ENCODE measurements at regions of chr1 and their contacts with region 1.

Region 1: DNA sequence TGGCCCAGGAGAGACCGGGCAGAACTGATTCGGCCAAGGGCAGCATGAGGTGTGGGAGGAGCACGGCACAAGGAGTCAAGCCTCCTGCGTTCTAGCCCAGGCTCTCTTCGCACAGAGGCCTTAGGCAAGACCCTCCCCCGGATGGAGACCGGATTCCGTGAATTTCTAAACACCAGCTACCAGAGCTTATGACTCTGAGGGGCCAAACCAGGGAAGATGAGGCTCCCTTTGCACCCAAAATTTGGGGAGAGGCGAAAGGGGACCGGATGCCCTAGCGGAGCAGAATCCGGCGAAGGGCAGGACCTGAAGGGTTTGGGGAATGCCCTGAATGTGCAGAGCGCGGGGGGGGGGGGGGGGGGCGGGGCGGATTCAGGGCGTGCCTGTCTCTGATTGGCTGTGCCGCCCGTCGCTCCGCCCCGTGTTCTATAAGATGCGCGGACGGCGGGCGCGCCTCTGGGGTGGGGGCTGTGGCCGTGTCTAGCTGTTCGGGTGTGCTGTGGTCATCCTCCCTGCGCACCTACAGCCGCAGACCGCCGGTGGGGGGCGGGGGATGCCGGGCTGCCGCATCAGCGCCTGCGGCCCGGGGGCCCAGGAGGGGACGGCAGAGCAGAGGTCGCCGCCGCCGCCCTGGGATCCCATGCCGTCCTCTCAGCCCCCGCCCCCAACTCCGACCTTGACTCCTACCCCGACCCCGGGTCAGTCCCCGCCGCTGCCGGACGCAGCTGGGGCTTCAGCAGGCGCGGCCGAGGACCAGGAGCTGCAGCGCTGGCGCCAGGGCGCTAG is at the start of gene TRNP1:
- DNase-seq: peak; percentile 88
- ATAC-seq: peak; percentile 54
- H3K4me3 ChIP-seq: peak within 1 kb of the TSS; percentile 92 to 97 (median 96)
- H3K27ac ChIP-seq: peak within 1 kb of the TSS; percentile 100
- H3K4me1 ChIP-seq: peaks cover 72% of the 10 kb centered on the region
- H3K27me3 ChIP-seq: no peaks in the 10 kb centered on the region; a peak in 1 of 5 replicates
- CTCF ChIP-seq: peak; percentile 43
- EP300 ChIP-seq: peak in 1 of 2 experiments; percentile 74; a peak in 2 of 4 replicates
- POLR2A ChIP-seq: peak in 1 of 2 experiments; percentile 97; a peak in 2 of 4 replicates
- RAD21 ChIP-seq: peak; percentile 68
- total RNA-seq, gene TRNP1: 35.6 and 42.0 TPM in 2 replicates

Region 2: GRCh38 chr1:26391450-26391849 is 602.0 kb before region 1 on chr1:
- CTCF ChIA-PET with region 1: no interaction called
- POLR2A ChIA-PET with region 1: no interaction called
- in situ Hi-C with region 1: no loop called
- intact Hi-C with region 1: no loop called
- DNase-seq: peak; percentile 52
- ATAC-seq: peak; percentile 67
- H3K4me3 ChIP-seq: no peak overlapping the region
- H3K27ac ChIP-seq: no peak overlapping the region
- H3K4me1 ChIP-seq: peaks cover 55% of the 10 kb centered on the region
- H3K27me3 ChIP-seq: no peaks in the 10 kb centered on the region; a peak in 2 of 5 replicates
- CTCF ChIP-seq: peak; percentile 81
- EP300 ChIP-seq: no peak
- POLR2A ChIP-seq: no peak
- RAD21 ChIP-seq: peak; percentile 87

Region 3: GRCh38 chr1:26784023-26784871 is 209.2 kb before region 1 on chr1:
- CTCF ChIA-PET with region 1: no interaction called
- POLR2A ChIA-PET with region 1: no interaction called
- in situ Hi-C with region 1: no loop called
- intact Hi-C with region 1: no loop called
- DNase-seq: peak; percentile 99
- ATAC-seq: peak; percentile 76
- H3K4me3 ChIP-seq: peak overlapping the region in 1 of 3 experiments; percentile 17; a peak in 1 of 6 replicates
- H3K27ac ChIP-seq: peak overlapping the region; percentile 97
- H3K4me1 ChIP-seq: peaks cover 60% of the 10 kb centered on the region
- H3K27me3 ChIP-seq: no peaks in the 10 kb centered on the region; a peak in 1 of 5 replicates
- CTCF ChIP-seq: peak; percentile 49
- EP300 ChIP-seq: peak; percentile 76 to 84
- POLR2A ChIP-seq: peak in 1 of 2 experiments; percentile 36; a peak in 1 of 4 replicates
- RAD21 ChIP-seq: no peak

Region 4: DNA sequence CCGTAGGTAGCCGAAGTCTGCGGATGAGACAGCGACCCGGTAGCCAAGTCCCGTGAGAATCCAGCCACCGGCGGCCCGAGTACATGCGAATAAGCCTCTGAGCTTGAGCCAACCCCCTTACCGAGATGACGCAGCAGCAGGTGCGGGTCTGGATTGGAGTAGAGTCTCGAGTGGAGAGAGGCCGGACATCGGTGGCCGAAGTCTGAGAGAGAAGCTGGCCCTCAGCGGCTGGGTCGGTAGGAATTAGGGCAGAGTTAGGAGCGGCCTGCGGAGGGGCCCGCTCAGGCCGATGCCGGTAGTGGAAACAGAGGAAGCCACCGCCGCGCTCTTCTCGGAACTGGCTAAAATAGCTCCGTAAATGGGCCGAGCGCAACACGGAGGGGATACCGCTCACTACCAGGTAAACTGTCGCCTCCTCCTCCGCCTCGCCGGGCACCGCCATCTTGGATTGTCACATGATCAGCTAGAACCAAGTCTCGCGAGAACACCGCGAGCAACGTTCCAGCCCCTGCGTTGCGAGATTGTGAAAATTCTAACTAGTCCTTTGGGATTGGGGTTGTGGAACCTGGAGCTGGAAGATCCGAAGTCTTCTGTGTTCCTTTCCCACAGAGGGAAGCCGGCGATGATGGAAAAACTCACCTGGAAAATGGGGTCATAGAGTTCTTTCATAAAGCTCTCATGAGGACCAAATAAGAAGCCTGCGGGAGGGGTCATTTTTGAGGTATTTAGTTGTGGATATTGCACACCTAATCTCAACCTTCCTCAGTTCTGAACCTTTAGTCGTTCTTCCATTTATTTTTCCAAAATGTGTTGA is 93.2 kb before region 1 on chr1 and contains the start of gene GPATCH3:
- CTCF ChIA-PET with region 1: no interaction called
- POLR2A ChIA-PET with region 1: interaction called, 17 read pairs
- in situ Hi-C with region 1: no loop called
- intact Hi-C with region 1: no loop called
- DNase-seq: peak; percentile 88
- ATAC-seq: peak; percentile 89
- H3K4me3 ChIP-seq: peak within 1 kb of the TSS; percentile 76 to 94 (median 89)
- H3K27ac ChIP-seq: peak within 1 kb of the TSS; percentile 89
- H3K4me1 ChIP-seq: peaks cover 47% of the 10 kb centered on the region
- H3K27me3 ChIP-seq: no peaks in the 10 kb centered on the region; a peak in 1 of 5 replicates
- CTCF ChIP-seq: no peak
- EP300 ChIP-seq: peak in 1 of 2 experiments; percentile 36; a peak in 1 of 4 replicates
- POLR2A ChIP-seq: peak; percentile 79 to 98
- RAD21 ChIP-seq: no peak; the same call in none of the 2 replicates
- total RNA-seq, gene GPATCH3: 11.0 and 12.5 TPM in 2 replicates

Region 5: GRCh38 chr1:26938004-26938658 is 55.3 kb before region 1 on chr1:
- CTCF ChIA-PET with region 1: no interaction called
- POLR2A ChIA-PET with region 1: interaction called, 17 read pairs
- in situ Hi-C with region 1: no loop called
- intact Hi-C with region 1: loop called (anchors 1 kb)
- DNase-seq: peak; percentile 98
- ATAC-seq: peak; percentile 97
- H3K4me3 ChIP-seq: peak overlapping the region in 1 of 3 experiments; percentile 19; a peak in 2 of 6 replicates
- H3K27ac ChIP-seq: peak overlapping the region; percentile 84
- H3K4me1 ChIP-seq: peaks cover 51% of the 10 kb centered on the region
- H3K27me3 ChIP-seq: no peaks in the 10 kb centered on the region
- CTCF ChIP-seq: peak; percentile 48
- EP300 ChIP-seq: peak in 1 of 2 experiments; percentile 88; a peak in 2 of 4 replicates
- POLR2A ChIP-seq: peak; percentile 25 to 51; a peak in 2 of 4 replicates
- RAD21 ChIP-seq: no peak; the same call in 1 of the 2 replicates

Region 6: DNA sequence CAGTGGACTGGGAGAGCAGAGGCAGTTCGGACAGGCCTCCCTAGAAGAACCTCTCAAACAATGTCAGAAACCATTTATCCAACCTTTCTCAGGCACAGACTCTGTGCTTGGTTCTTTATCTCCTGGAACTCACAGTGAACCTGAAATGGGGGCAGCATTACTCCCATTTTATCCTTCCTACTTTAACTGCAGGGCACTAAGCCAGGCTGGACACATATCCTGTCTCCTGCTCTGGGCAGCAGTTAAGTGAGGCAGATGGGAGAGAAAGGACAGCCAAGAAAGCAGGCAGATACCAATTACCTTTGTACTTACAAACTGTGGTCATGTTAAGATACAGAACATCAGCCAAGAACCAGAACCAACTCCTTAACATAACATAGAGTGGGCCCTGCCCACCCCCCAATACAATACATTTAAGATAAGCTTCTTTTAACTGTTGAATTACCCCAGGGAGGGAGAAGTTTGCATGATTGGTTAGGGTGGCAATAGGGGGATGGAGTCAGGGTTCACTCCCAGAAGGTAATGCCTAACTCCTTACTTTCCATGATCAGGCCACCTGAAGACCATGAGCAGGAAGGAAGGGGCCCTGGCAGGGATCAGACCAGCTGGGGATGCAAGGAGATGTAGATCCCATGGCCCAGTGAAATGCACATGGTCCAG is 44.0 kb before region 1 on chr1:
- CTCF ChIA-PET with region 1: no interaction called
- POLR2A ChIA-PET with region 1: interaction called, 23 read pairs
- in situ Hi-C with region 1: no loop called
- intact Hi-C with region 1: no loop called
- DNase-seq: no peak
- ATAC-seq: no peak
- H3K4me3 ChIP-seq: no peak overlapping the region
- H3K27ac ChIP-seq: peak overlapping the region; percentile 63
- H3K4me1 ChIP-seq: peaks cover 68% of the 10 kb centered on the region
- H3K27me3 ChIP-seq: no peaks in the 10 kb centered on the region
- CTCF ChIP-seq: no peak
- EP300 ChIP-seq: no peak
- POLR2A ChIP-seq: no peak
- RAD21 ChIP-seq: no peak

Region 7: DNA sequence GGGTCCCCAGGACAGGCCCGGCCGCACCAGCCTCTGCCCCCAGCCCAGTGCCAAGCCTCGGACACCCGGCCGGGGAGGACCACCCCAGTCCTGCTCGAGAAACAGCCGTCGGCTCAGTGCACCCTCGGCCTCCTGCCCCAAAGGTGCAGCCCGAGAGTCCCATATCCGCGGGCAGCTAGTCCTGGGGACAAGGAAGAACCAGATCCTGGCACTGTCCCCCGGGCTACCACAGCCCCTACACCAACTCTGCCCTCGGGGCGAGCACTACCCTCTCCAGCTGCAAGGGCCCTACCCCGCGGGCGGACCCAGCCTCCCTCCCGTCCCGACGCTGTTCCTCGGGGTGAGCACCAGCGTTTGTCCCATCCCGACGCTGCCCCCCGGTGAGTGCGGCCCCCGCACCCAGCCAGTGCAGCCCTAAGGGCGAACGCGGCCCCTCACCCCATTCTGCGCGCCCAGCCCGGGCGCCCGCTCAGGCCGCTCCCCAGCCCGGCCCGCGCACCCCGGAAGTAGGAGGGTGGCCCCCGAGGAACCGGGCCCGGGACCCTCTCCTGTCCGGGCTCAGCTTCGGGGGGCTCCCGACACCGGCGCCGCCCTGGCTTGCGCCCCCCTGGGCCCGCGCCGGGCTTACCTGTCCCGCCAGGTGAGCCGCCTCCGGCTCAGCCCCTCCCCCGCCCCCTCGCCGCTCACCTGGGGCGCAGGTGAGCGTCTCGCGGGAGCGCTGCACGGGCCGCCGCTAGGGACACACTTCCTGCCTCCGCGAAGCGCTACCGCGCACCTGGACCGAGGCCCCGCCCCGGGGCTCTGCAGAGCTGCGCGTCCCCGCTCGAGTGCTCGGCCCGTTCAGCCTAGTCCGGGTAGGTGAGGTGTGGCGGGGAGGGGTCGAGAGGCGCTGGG is 33.5 kb before region 1 on chr1 and contains the start of gene KDF1:
- CTCF ChIA-PET with region 1: no interaction called
- POLR2A ChIA-PET with region 1: interaction called, 63 read pairs
- in situ Hi-C with region 1: loop called (anchors 5 kb)
- intact Hi-C with region 1: no loop called
- DNase-seq: no peak
- ATAC-seq: peak; percentile 76
- H3K4me3 ChIP-seq: peak within 1 kb of the TSS; percentile 82 to 93 (median 88)
- H3K27ac ChIP-seq: peak within 1 kb of the TSS; percentile 6
- H3K4me1 ChIP-seq: peaks cover 66% of the 10 kb centered on the region
- H3K27me3 ChIP-seq: no peaks in the 10 kb centered on the region; a peak in 1 of 5 replicates
- CTCF ChIP-seq: peak; percentile 48; the same call in 1 of the 2 replicates
- EP300 ChIP-seq: no peak
- POLR2A ChIP-seq: 0 out of 4 replicates have a peak, but pooled peaks of 1 of the 2 experiments have one; percentile 11
- RAD21 ChIP-seq: no peak; the same call in 1 of the 2 replicates
- total RNA-seq, gene KDF1: 1.9 and 2.4 TPM in 2 replicates

Region 8: DNA sequence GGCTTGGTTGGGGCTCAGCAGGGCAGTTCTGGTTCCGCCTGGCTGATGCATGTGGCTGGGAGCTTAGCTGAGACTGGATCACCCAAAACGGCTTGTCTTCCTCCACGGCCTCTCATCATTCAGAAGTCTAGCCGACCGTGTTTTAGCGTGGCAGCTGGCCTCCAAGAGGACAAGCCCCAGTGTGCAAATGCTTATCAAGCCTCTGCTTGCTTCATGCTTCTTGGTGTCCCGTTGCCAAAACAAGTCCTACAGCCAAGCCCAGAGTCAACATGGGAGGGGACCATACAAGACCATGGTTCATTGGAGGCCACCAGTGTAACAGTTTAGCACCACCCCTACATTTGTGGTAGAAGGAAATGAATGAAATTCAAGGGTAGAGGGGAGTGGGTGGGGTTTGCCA is 22.6 kb before region 1 on chr1:
- CTCF ChIA-PET with region 1: interaction called, 11 read pairs
- POLR2A ChIA-PET with region 1: interaction called, 253 read pairs
- in situ Hi-C with region 1: no loop called
- intact Hi-C with region 1: loop called (anchors 1 kb)
- DNase-seq: peak; percentile 82
- ATAC-seq: peak; percentile 61
- H3K4me3 ChIP-seq: peak overlapping the region in 1 of 3 experiments; percentile 45; a peak in 2 of 6 replicates
- H3K27ac ChIP-seq: no peak overlapping the region
- H3K4me1 ChIP-seq: peaks cover 81% of the 10 kb centered on the region
- H3K27me3 ChIP-seq: 0 out of 5 replicates have a peak, but pooled peaks cover 0 to 4% of the 10 kb centered on the region in 2 experiments
- CTCF ChIP-seq: no peak
- EP300 ChIP-seq: peak in 1 of 2 experiments; percentile 55; a peak in 1 of 4 replicates
- POLR2A ChIP-seq: no peak
- RAD21 ChIP-seq: no peak

Region 9: GRCh38 chr1:27011976-27012563 is 18.6 kb after region 1 on chr1:
- CTCF ChIA-PET with region 1: no interaction called
- POLR2A ChIA-PET with region 1: interaction called, 13 read pairs
- in situ Hi-C with region 1: no loop called
- intact Hi-C with region 1: no loop called
- DNase-seq: no peak
- ATAC-seq: no peak
- H3K4me3 ChIP-seq: peak overlapping the region in 2 of 3 experiments; percentile 30 to 49; a peak in 3 of 6 replicates
- H3K27ac ChIP-seq: no peak overlapping the region
- H3K4me1 ChIP-seq: peaks cover 36% of the 10 kb centered on the region
- H3K27me3 ChIP-seq: peaks cover 2 to 22% of the 10 kb centered on the region in 2 experiments; a peak in 4 of 5 replicates
- CTCF ChIP-seq: no peak
- EP300 ChIP-seq: no peak
- POLR2A ChIP-seq: no peak
- RAD21 ChIP-seq: no peak

Region 10: DNA sequence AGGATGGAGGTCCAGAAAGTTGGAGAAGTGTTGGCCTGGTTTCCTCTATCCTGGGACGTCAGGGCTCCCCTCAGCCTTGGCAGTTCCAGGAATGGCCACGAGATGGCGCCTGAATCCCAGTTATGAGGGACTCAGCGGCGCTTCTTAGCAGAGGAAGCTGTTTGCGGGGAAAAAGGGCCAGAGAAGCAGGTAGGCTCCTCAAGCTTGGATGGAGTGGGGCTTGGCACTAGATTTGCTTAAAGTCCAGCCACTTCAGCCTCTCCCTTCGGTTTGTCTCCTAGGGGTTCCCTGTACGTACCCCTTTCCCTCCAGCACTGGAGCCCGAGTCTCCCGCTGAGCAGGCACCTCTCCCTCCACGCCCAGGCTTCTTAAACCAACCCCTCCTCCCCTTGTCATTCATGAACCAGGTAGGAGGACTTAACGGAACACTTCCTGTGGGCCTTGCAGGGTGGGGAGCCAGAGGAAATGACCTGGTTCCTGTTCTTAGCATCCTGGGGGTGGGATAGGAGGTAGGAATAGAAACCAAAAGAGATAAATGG is 51.3 kb after region 1 on chr1:
- CTCF ChIA-PET with region 1: no interaction called
- POLR2A ChIA-PET with region 1: no interaction called
- in situ Hi-C with region 1: no loop called
- intact Hi-C with region 1: no loop called
- DNase-seq: peak; percentile 62
- ATAC-seq: peak; percentile 87
- H3K4me3 ChIP-seq: no peak overlapping the region
- H3K27ac ChIP-seq: no peak overlapping the region
- H3K4me1 ChIP-seq: peaks cover 8% of the 10 kb centered on the region; the same call in 1 of the 2 replicates
- H3K27me3 ChIP-seq: peaks cover 6 to 40% of the 10 kb centered on the region in 2 experiments; a peak in 4 of 5 replicates
- CTCF ChIP-seq: peak; percentile 95
- EP300 ChIP-seq: no peak
- POLR2A ChIP-seq: no peak
- RAD21 ChIP-seq: peak; percentile 89